Calu3 (cell line): ENCODE measurements at regions of chr21 and their contacts with region 1.

Region 1: GRCh38 chr21:14864211-14865021 is 200.4 kb downstream of the NRIP1 start:
- DNase-seq: peak; percentile 78
- H3K4me3 Mint-ChIP-seq: no peak overlapping the region
- H3K27ac Mint-ChIP-seq: peak overlapping the region; percentile 65
- H3K4me1 Mint-ChIP-seq: peaks cover 44% of the 10 kb centered on the region
- H3K27me3 Mint-ChIP-seq: no peaks in the 10 kb centered on the region
- CTCF ChIP-seq: peak; percentile 53

Region 2: DNA sequence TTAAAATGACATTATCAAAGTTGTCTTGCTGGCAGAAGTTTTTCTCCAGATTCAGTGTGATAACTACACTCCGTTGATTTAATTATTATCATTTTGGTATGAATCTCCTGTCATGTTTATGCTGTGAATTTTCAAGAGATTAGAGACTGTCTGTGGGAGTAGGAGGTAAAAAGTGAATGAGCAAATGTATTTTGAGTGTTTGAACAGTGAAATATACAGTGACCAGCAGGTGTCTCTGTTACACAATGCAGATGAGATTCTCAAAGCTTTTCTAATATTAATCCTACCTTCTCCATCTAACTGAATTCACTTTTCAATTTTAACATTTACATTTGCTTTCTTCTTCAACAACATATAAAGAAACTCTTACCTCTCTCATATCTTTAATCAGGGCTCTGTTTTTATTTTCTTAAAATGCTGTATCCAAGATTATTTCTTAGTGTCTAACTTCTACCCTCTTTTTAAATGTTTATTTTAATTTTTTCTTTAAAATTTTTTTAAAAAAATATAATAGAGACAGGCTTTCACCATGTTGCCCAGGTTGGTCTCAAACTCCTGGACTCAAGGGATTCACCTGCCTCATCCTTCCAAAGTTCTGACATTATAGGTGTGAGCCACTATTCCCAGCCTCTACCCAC is 460.6 kb before region 1 on chr21:
- CTCF ChIA-PET with region 1: no interaction called
- intact Hi-C with region 1: loop called (anchors 1 kb)
- DNase-seq: peak; percentile 6
- H3K4me3 Mint-ChIP-seq: no peak overlapping the region
- H3K27ac Mint-ChIP-seq: no peak overlapping the region
- H3K4me1 Mint-ChIP-seq: no peaks in the 10 kb centered on the region
- H3K27me3 Mint-ChIP-seq: no peaks in the 10 kb centered on the region
- CTCF ChIP-seq: no peak

Region 3: GRCh38 chr21:15051644-15052458 is 187.4 kb after region 1 on chr21:
- CTCF ChIA-PET with region 1: no interaction called
- intact Hi-C with region 1: loop called (anchors 5 kb)
- DNase-seq: no peak
- H3K4me3 Mint-ChIP-seq: peak overlapping the region; percentile 75
- H3K27ac Mint-ChIP-seq: peak overlapping the region; percentile 97
- H3K4me1 Mint-ChIP-seq: peaks cover 51% of the 10 kb centered on the region
- H3K27me3 Mint-ChIP-seq: no peaks in the 10 kb centered on the region
- CTCF ChIP-seq: no peak

Region 4: DNA sequence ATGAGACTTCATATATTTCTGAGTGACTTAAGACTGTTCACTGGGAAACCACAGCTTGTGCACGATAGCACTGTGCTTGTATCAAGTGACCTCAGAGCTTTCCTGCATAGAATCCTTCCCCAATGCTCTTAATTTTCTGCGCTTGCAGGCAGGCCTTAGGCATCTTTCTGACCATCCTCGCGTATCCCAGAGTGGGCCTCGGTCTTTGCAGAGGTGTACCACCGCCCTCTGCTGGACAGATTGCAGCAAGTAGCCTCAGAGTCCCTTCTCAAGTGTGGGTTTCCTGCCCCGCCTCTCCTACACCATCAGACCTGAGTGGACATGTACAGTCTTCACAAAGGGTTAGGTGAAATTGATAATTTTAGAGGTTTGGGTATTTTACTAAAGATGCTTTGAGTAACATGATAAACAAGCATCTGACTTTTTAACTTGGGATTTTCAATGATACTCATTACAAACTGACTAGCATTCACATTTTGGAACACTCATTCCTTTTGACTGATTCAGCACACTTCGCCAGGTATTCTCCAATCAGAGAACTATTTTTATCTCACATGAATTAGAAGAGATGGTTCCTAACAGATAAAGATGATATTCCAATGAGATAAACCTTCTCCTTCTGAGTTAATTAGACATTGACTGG is 618.8 kb after region 1 on chr21:
- CTCF ChIA-PET with region 1: interaction called, 3 read pairs
- intact Hi-C with region 1: loop called (anchors 1 kb)
- DNase-seq: peak; percentile 83
- H3K4me3 Mint-ChIP-seq: no peak overlapping the region
- H3K27ac Mint-ChIP-seq: no peak overlapping the region
- H3K4me1 Mint-ChIP-seq: no peaks in the 10 kb centered on the region
- H3K27me3 Mint-ChIP-seq: no peaks in the 10 kb centered on the region
- CTCF ChIP-seq: peak; percentile 75